CD8-positive, alpha-beta T cell (primary cell): ENCODE measurements at regions of chr2 and their contacts with region 1.

Region 1: GRCh38 chr2:231557571-231558237 is 27.5 kb upstream of the NMUR1 start:
- DNase-seq: peak; percentile 29 to 91 (median 64)
- ATAC-seq: peak; percentile 96
- H3K4me3 ChIP-seq: no peak overlapping the region
- H3K4me3 Mint-ChIP-seq: no peak overlapping the region
- H3K27ac ChIP-seq: peak overlapping the region in 1 of 2 experiments; percentile 45
- H3K27ac Mint-ChIP-seq: peak overlapping the region; percentile 67
- H3K4me1 ChIP-seq: peaks cover 20% of the 10 kb centered on the region
- H3K4me1 Mint-ChIP-seq: peaks cover 25% of the 10 kb centered on the region
- H3K27me3 ChIP-seq: no peaks in the 10 kb centered on the region
- H3K27me3 Mint-ChIP-seq: no peaks in the 10 kb centered on the region
- CTCF ChIP-seq: peak; percentile 66

Region 2: DNA sequence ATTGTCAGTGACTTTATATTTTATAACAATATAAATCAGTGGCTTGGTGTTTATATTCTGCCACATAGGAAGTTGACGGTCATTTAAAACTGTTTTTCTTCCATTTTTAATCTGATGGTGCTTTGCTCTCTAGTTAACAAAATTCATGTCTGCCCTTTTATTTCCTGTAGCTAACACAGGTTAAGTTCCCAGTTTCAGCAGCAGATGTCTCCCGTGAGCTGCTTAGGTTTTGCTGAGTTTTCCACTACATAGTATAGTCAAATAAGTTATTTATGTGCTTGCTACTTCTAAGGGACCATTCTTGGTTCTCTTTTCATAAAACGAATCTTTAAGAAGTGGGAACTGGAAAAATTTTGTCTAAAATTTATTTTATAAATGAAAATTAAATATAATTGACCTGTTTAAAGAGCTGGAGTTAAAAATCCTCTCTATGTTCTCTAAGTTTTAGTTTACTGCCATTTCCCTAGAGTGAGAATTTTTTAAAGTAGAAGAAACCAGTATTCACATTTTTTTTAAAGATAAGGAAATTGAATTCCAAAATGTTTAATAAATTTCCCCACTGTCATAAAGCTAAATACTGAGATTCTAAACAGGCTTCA is 453.5 kb before region 1 on chr2:
- CTCF ChIA-PET with region 1: no interaction called
- POLR2A ChIA-PET with region 1: no interaction called
- intact Hi-C with region 1: loop called in 1 of 2 experiments (anchors 1 kb)
- DNase-seq: peak; percentile 10 to 67 (median 51)
- ATAC-seq: peak; percentile 92
- H3K4me3 ChIP-seq: no peak overlapping the region
- H3K4me3 Mint-ChIP-seq: no peak overlapping the region
- H3K27ac ChIP-seq: no peak overlapping the region
- H3K27ac Mint-ChIP-seq: no peak overlapping the region
- H3K4me1 ChIP-seq: no peaks in the 10 kb centered on the region
- H3K4me1 Mint-ChIP-seq: no peaks in the 10 kb centered on the region
- H3K27me3 ChIP-seq: no peaks in the 10 kb centered on the region
- H3K27me3 Mint-ChIP-seq: no peaks in the 10 kb centered on the region
- CTCF ChIP-seq: peak; percentile 73

Region 3: GRCh38 chr2:231227309-231228162 is 330.2 kb before region 1 on chr2:
- CTCF ChIA-PET with region 1: no interaction called
- POLR2A ChIA-PET with region 1: no interaction called
- intact Hi-C with region 1: loop called in 1 of 2 experiments (anchors 5 kb)
- DNase-seq: peak in 8 of 9 experiments; percentile 10 to 73 (median 37)
- ATAC-seq: peak; percentile 89
- H3K4me3 ChIP-seq: no peak overlapping the region
- H3K4me3 Mint-ChIP-seq: no peak overlapping the region
- H3K27ac ChIP-seq: no peak overlapping the region
- H3K27ac Mint-ChIP-seq: no peak overlapping the region
- H3K4me1 ChIP-seq: no peaks in the 10 kb centered on the region
- H3K4me1 Mint-ChIP-seq: no peaks in the 10 kb centered on the region
- H3K27me3 ChIP-seq: no peaks in the 10 kb centered on the region
- H3K27me3 Mint-ChIP-seq: no peaks in the 10 kb centered on the region
- CTCF ChIP-seq: peak; percentile 64

Region 4: DNA sequence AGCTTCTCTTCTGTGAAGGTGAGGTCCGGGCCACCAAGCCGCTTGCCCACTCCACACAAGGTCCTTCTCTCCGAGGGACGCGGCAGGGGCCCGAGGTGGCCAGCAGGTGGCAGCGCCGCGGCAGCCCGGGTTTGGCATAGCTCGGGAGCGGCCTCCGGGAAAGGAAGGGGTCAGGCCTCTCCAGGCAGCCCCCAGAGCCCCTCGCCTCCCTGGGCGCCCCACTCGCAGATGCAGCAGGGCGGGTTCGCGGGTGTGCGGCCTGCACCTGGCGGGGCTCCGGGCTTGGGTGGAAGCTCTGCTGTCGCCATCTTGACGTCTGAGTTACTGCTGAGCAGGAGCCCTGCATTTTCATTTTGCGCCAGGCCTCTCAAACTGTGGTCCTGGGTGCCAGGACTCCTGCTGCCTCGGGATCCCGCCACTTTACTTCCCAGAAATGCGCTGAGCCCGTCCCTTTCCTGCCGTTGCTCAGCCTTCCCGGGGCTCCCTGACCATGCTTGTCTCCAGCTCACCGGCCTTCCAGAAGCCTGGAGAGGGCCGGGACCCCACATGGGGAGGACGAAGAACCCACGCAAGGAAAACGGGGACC is 74.8 kb before region 1 on chr2:
- CTCF ChIA-PET with region 1: interaction called, 60 read pairs
- POLR2A ChIA-PET with region 1: no interaction called
- intact Hi-C with region 1: loop called (anchors 1 kb)
- DNase-seq: peak; percentile 47 to 86 (median 73)
- ATAC-seq: peak; percentile 82
- H3K4me3 ChIP-seq: peak overlapping the region; percentile 71 to 73
- H3K4me3 Mint-ChIP-seq: peak overlapping the region; percentile 76
- H3K27ac ChIP-seq: peak overlapping the region; percentile 77 to 89
- H3K27ac Mint-ChIP-seq: peak overlapping the region; percentile 91
- H3K4me1 ChIP-seq: peaks cover 4% of the 10 kb centered on the region
- H3K4me1 Mint-ChIP-seq: peaks cover 14% of the 10 kb centered on the region
- H3K27me3 ChIP-seq: no peaks in the 10 kb centered on the region
- H3K27me3 Mint-ChIP-seq: no peaks in the 10 kb centered on the region
- CTCF ChIP-seq: peak; percentile 75

Region 5: DNA sequence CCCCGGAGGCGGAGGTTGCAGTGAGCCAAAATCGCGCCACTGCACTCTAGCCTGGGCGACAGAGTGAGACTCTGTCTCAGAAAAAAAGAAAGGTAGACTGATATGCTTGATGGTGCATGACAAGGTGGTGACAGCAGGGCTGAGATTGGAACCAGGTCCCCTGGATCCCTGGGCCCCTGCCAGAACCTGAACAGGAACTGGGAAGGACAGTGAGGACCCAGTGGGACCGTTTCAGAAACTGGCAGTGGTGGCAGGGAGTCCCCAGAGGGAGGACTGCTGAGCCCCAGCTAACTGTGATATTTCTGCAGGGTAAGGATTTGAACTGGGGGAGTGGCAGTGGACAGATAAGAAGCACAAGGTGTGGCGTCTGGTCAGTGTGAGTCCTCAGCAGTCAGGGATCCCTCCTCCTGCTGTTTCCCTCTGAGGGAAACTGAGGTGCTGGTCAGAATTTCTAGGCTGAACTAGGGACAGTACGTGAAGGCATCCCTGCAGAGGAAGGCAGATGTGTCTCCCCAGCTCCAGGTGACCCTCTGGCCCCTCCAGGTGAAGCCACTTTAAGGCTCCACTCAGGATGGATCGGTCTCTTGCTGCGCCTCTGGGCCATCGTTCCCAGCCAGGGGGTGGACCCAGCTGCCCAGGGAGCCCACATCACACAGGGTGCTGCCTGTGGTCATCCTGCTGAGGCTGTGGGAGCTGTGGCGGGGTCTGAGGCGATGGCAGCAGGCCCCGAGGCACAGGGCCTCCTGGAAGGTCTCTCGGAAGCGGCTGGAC is 33.0 kb before region 1 on chr2:
- CTCF ChIA-PET with region 1: interaction called, 43 read pairs
- POLR2A ChIA-PET with region 1: no interaction called
- intact Hi-C with region 1: no loop called
- DNase-seq: no peak
- ATAC-seq: no peak
- H3K4me3 ChIP-seq: no peak overlapping the region
- H3K4me3 Mint-ChIP-seq: peak overlapping the region; percentile 39
- H3K27ac ChIP-seq: peak overlapping the region in 1 of 2 experiments; percentile 69
- H3K27ac Mint-ChIP-seq: peak overlapping the region; percentile 71
- H3K4me1 ChIP-seq: peaks cover 34% of the 10 kb centered on the region
- H3K4me1 Mint-ChIP-seq: peaks cover 38% of the 10 kb centered on the region
- H3K27me3 ChIP-seq: no peaks in the 10 kb centered on the region
- H3K27me3 Mint-ChIP-seq: no peaks in the 10 kb centered on the region
- CTCF ChIP-seq: no peak

Region 6: DNA sequence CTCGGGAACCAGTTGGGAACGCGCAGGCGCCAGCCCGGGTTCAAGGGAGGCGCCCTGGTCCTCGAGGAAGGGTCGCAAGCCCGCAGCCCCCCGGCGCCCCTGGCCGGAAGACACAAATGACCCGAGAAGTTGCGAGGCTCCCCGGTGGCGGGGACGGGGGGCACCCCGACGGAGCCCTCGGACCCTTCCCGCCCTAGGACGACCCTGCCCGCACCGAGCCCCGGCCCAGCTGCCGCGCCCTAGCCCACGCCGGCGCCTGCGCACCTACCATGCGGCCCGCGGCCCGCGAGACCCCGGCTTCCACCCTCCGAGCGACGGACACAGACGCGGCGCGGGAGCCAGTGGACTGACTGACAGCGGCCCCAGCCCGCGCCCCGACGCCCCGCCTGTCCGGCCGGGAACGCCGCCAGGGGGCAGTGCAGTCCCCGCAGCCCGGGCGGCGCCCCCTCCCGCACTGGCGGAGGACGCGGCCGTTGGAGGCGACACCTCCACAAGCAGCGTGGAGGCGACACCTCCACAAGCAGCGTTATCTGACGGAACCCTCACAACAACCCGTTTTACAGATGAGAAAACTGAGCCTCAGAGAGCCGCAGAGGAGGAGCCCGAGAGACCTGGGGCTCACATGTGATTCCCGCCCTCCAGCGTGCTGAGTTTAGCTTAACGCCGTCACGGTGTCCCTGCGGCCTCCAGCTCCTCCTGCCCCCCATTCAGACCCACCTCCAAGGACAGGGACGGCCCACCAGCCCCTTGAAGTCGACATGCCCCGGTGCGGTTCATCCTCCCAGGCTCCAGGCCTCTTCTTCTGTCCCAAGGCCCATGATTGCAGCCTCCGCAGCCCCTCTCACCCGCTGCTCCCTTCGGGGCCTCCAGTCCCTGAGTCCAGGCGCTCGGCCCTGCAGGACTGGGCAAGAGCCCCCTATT is 27.4 kb before region 1 on chr2 and contains the start of gene NMUR1:
- CTCF ChIA-PET with region 1: interaction called, 43 read pairs
- POLR2A ChIA-PET with region 1: no interaction called
- intact Hi-C with region 1: loop called (anchors 1 kb)
- DNase-seq: peak; percentile 48 to 89 (median 69)
- ATAC-seq: peak; percentile 92
- H3K4me3 ChIP-seq: peak within 1 kb of the TSS; percentile 33 to 50
- H3K4me3 Mint-ChIP-seq: peak within 1 kb of the TSS; percentile 58
- H3K27ac ChIP-seq: peak within 1 kb of the TSS in 1 of 2 experiments; percentile 67
- H3K27ac Mint-ChIP-seq: peak within 1 kb of the TSS; percentile 32
- H3K4me1 ChIP-seq: peaks cover 33% of the 10 kb centered on the region
- H3K4me1 Mint-ChIP-seq: peaks cover 30% of the 10 kb centered on the region
- H3K27me3 ChIP-seq: peaks cover 0 to 7% of the 10 kb centered on the region in 2 experiments
- H3K27me3 Mint-ChIP-seq: peaks cover 8% of the 10 kb centered on the region
- CTCF ChIP-seq: peak; percentile 89
- total RNA-seq, gene NMUR1: 0.27 to 0.50 TPM

Region 7: GRCh38 chr2:231535961-231536360 is 21.7 kb before region 1 on chr2:
- CTCF ChIA-PET with region 1: interaction called, 43 read pairs
- POLR2A ChIA-PET with region 1: no interaction called
- intact Hi-C with region 1: no loop called
- DNase-seq: no peak
- ATAC-seq: no peak
- H3K4me3 ChIP-seq: no peak overlapping the region
- H3K4me3 Mint-ChIP-seq: no peak overlapping the region
- H3K27ac ChIP-seq: no peak overlapping the region
- H3K27ac Mint-ChIP-seq: no peak overlapping the region
- H3K4me1 ChIP-seq: peaks cover 8% of the 10 kb centered on the region
- H3K4me1 Mint-ChIP-seq: peaks cover 7% of the 10 kb centered on the region
- H3K27me3 ChIP-seq: peaks cover 0 to 2% of the 10 kb centered on the region in 2 experiments
- H3K27me3 Mint-ChIP-seq: peaks cover 5% of the 10 kb centered on the region
- CTCF ChIP-seq: no peak